Endothelial cell of umbilical vein (primary cell): ENCODE measurements at regions of chr20 and their contacts with region 1.

Region 1: DNA sequence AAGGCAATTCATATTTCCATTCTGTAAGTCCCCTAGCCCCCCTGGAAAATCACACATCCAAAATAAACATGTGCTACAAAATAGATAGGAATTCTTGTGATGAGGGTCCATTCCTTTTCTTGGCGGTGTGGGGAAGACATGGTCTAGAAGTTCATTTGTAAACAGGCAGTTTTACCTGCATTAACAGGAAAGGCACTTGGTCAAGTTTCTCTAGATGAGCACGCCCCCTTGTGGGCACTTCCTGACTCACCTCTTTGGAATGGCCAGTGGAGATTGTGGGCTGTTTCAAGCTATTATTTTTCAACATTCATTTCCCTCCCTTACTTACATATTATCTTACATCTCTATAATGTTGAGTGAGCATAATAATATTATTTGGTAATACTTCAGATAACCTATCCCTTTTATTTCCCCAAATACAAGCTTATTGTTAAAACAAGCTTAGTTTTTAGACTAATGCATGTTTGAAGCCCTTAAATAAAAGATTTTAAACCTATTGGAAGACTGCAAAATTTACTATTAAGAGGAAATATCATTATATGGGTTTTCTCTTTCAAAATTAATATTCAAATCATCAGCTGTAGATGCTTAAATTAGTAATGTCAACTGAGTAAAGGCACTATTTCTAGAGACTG is 92.1 kb downstream of the TASP1 start:
- DNase-seq: peak; percentile 72
- H3K4me3 ChIP-seq: no peak overlapping the region
- H3K27ac ChIP-seq: no peak overlapping the region
- H3K4me1 ChIP-seq: no peaks in the 10 kb centered on the region
- H3K27me3 ChIP-seq: no peaks in the 10 kb centered on the region
- CTCF ChIP-seq: peak; percentile 79
- POLR2A ChIP-seq: no peak

Region 2: DNA sequence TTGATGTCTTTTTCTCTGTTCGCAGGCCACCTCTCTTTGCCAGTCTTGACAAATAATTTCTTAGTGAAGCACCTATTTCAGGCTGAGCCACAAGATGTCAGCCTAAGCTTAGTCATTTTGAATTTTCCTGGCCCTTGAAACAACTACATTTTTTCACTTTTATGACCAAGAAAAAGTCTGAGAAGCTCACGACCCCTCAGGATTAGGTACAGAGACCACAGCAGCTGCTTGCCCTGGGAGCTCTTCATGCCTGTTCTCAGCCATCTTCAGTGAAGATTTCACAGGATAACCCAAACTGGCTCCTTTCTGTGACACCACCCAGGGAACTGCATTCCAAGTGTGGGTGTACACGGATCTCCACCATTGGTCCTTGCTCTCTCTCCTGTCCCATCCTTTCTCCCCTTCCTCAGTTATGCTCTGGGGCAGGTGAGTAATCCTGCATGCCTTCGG is 576.2 kb before region 1 on chr20:
- CTCF ChIA-PET with region 1: interaction called, 13 read pairs
- POLR2A ChIA-PET with region 1: no interaction called
- dilution Hi-C with region 1: no loop called
- intact Hi-C with region 1: no loop called
- DNase-seq: peak; percentile 56
- H3K4me3 ChIP-seq: no peak overlapping the region
- H3K27ac ChIP-seq: no peak overlapping the region
- H3K4me1 ChIP-seq: no peaks in the 10 kb centered on the region
- H3K27me3 ChIP-seq: peaks cover 0 to 6% of the 10 kb centered on the region in 2 experiments
- CTCF ChIP-seq: peak; percentile 27 to 42
- POLR2A ChIP-seq: no peak

Region 3: GRCh38 chr20:13286607-13287006 is 260.0 kb before region 1 on chr20:
- CTCF ChIA-PET with region 1: no interaction called
- POLR2A ChIA-PET with region 1: no interaction called
- dilution Hi-C with region 1: no loop called
- intact Hi-C with region 1: no loop called
- DNase-seq: no peak
- H3K4me3 ChIP-seq: no peak overlapping the region
- H3K27ac ChIP-seq: no peak overlapping the region
- H3K4me1 ChIP-seq: no peaks in the 10 kb centered on the region
- H3K27me3 ChIP-seq: peaks cover 5 to 7% of the 10 kb centered on the region in 2 experiments
- CTCF ChIP-seq: no peak
- POLR2A ChIP-seq: no peak

Region 4: GRCh38 chr20:13325033-13325432 is 221.6 kb before region 1 on chr20:
- CTCF ChIA-PET with region 1: interaction called, 167 read pairs
- POLR2A ChIA-PET with region 1: no interaction called
- dilution Hi-C with region 1: no loop called
- intact Hi-C with region 1: loop called (anchors 1 kb)
- DNase-seq: peak; percentile 32
- H3K4me3 ChIP-seq: no peak overlapping the region
- H3K27ac ChIP-seq: no peak overlapping the region
- H3K4me1 ChIP-seq: no peaks in the 10 kb centered on the region
- H3K27me3 ChIP-seq: peaks cover 10 to 19% of the 10 kb centered on the region in 2 experiments
- CTCF ChIP-seq: peak; percentile 30 to 58
- POLR2A ChIP-seq: no peak

Region 5: GRCh38 chr20:13458860-13459451 is 87.7 kb before region 1 on chr20:
- CTCF ChIA-PET with region 1: interaction called, 81 read pairs
- POLR2A ChIA-PET with region 1: no interaction called
- dilution Hi-C with region 1: no loop called
- intact Hi-C with region 1: loop called (anchors 1 kb)
- DNase-seq: peak; percentile 35
- H3K4me3 ChIP-seq: no peak overlapping the region
- H3K27ac ChIP-seq: no peak overlapping the region
- H3K4me1 ChIP-seq: no peaks in the 10 kb centered on the region
- H3K27me3 ChIP-seq: no peaks in the 10 kb centered on the region
- CTCF ChIP-seq: peak; percentile 72 to 74
- POLR2A ChIP-seq: no peak

Region 6: GRCh38 chr20:13533946-13534345 is 12.7 kb before region 1 on chr20:
- CTCF ChIA-PET with region 1: interaction called, 54 read pairs
- POLR2A ChIA-PET with region 1: no interaction called
- dilution Hi-C with region 1: no loop called
- intact Hi-C with region 1: no loop called
- DNase-seq: no peak
- H3K4me3 ChIP-seq: no peak overlapping the region
- H3K27ac ChIP-seq: no peak overlapping the region
- H3K4me1 ChIP-seq: no peaks in the 10 kb centered on the region
- H3K27me3 ChIP-seq: no peaks in the 10 kb centered on the region
- CTCF ChIP-seq: no peak
- POLR2A ChIP-seq: no peak

Region 7: GRCh38 chr20:13755809-13756208 is 209.2 kb after region 1 on chr20:
- CTCF ChIA-PET with region 1: no interaction called
- POLR2A ChIA-PET with region 1: no interaction called
- dilution Hi-C with region 1: no loop called
- intact Hi-C with region 1: no loop called
- DNase-seq: no peak
- H3K4me3 ChIP-seq: no peak overlapping the region
- H3K27ac ChIP-seq: no peak overlapping the region
- H3K4me1 ChIP-seq: no peaks in the 10 kb centered on the region
- H3K27me3 ChIP-seq: no peaks in the 10 kb centered on the region
- CTCF ChIP-seq: no peak
- POLR2A ChIP-seq: no peak

Region 8: DNA sequence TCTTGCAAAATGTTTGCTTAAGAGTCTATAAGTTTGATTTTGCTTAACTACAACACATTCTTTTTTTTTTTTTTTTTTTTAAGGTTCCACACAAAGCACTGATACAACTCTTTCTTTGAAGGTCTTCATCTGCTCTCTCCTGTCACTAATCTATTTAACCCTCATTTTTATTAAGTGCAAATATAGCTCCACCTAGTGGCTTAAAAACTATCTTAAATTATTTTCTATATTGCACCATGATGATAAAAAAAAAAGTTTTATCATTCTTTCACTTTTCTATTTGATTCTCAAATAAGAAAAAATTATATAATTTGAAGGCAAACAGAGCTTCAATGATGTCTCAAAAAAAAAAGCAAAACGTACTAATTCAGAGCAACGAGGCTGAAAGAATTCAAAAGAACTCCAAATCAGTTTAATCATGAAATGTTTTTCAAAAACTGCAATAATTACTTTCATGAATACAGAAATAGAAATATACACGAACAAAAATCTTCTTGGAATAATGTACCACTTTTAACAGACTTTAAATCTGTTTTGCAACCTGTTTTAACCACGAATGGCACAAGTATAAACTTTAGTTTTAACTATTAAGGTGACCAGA is 225.3 kb after region 1 on chr20:
- CTCF ChIA-PET with region 1: interaction called, 29 read pairs
- POLR2A ChIA-PET with region 1: no interaction called
- dilution Hi-C with region 1: no loop called
- intact Hi-C with region 1: loop called (anchors 5 kb)
- DNase-seq: peak; percentile 31
- H3K4me3 ChIP-seq: no peak overlapping the region
- H3K27ac ChIP-seq: peak overlapping the region; percentile 34
- H3K4me1 ChIP-seq: peaks cover 14% of the 10 kb centered on the region
- H3K27me3 ChIP-seq: no peaks in the 10 kb centered on the region
- CTCF ChIP-seq: peak; percentile 8 to 16
- POLR2A ChIP-seq: no peak

Region 9: DNA sequence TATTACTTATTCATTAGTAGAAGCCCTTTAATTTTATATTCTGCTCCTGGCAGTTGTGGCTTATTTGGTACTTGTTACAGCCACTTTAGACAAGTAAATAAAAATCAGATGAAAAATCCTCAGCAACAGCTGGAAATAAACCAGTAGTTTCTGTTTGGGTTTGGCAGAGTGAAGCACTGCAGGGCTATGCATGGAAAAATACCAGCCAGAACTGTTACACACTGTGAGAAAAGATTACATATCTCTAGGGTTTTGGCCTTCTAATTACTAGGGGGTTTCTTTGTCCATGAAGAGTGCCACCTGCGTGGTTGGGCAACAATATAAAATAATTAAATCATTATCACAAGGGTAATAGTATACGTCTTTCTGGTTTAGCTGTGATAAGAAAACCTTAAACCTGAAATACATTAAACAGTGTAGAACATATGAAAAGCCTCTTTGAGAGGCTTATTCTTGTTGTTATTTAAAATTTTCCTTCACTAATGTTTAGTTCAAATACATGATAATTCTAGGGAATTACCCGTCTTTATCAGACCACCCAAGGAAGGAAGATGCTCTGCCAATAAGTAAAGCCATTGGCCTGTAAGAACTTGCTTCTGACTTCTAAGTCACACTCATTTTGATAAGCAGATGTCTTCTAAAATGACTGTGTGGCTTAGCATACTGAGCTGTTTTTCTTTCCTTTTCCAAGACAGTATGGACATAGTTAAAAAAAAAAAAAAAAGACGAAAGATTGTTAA is 1110.8 kb after region 1 on chr20:
- CTCF ChIA-PET with region 1: no interaction called
- POLR2A ChIA-PET with region 1: no interaction called
- dilution Hi-C with region 1: no loop called
- intact Hi-C with region 1: no loop called
- DNase-seq: no peak
- H3K4me3 ChIP-seq: no peak overlapping the region
- H3K27ac ChIP-seq: no peak overlapping the region
- H3K4me1 ChIP-seq: no peaks in the 10 kb centered on the region
- H3K27me3 ChIP-seq: no peaks in the 10 kb centered on the region
- CTCF ChIP-seq: no peak
- POLR2A ChIP-seq: no peak